IMR-90 (cell line): ENCODE measurements at regions of chr6 and their contacts with region 1.

Region 1: DNA sequence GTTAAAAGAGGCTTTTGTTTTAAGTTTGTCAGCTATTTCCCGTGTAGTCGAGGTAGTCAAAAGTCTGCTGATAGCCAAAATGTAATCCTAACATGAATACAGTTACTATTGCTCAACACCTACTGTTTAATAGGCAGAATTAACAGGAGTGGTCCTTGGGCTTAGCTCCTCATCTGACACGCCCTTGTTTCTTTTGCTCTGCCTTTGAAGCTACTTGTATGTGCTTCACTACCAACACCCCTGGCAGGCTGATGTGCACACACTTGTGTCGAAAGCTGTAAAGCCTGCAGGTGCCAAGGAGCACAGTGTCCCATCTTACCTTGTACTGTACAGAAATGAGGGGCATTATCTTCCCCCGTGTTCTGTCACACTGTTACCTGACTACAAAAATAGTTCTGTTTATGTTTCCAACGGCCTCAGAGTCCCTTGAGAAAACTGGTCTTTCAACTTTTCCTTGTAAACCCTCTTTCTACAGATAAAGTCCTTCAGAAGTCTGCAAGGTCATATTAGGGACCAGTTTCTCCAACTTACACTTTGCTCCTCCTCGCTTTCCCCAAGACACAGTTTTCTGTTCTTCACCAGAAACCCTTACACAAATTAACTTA is 9.3 kb downstream of the SDHAF4 start:
- DNase-seq: no peak
- ATAC-seq: no peak
- H3K4me3 ChIP-seq: no peak overlapping the region
- H3K27ac ChIP-seq: no peak overlapping the region
- H3K4me1 ChIP-seq: no peaks in the 10 kb centered on the region
- H3K27me3 ChIP-seq: no peaks in the 10 kb centered on the region
- CTCF ChIP-seq: no peak
- POLR2A ChIP-seq: no peak
- RAD21 ChIP-seq: no peak

Region 2: GRCh38 chr6:70520575-70520974 is 55.4 kb before region 1 on chr6:
- CTCF ChIA-PET with region 1: no interaction called
- POLR2A ChIA-PET with region 1: no interaction called
- dilution Hi-C with region 1: no loop called
- in situ Hi-C with region 1: no loop called
- intact Hi-C with region 1: loop called (anchors 10 kb)
- DNase-seq: peak; percentile 18
- ATAC-seq: no peak
- H3K4me3 ChIP-seq: no peak overlapping the region
- H3K27ac ChIP-seq: no peak overlapping the region
- H3K4me1 ChIP-seq: no peaks in the 10 kb centered on the region
- H3K27me3 ChIP-seq: no peaks in the 10 kb centered on the region
- CTCF ChIP-seq: peak; percentile 49
- POLR2A ChIP-seq: no peak
- RAD21 ChIP-seq: peak; percentile 64

Region 3: DNA sequence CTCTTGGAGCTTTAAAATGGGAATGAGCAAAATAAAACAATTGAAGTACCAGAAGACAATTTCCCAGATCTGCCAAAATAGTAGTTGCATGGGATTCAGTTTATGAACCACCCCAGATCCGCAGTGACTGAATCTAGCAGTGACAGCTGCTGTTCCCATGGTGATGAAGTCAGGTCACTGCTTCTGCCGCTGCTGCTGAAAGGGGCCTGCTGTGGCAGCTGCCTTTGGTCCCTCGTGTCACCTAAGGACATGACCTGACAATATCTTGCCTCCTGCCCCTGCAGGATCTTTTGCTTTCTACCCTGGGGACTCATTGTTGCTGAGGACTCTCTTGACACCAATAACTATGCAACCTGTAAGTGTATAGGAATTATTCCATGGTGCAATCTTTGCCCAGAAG is 678.3 kb after region 1 on chr6:
- CTCF ChIA-PET with region 1: no interaction called
- POLR2A ChIA-PET with region 1: interaction called, 12 read pairs
- dilution Hi-C with region 1: no loop called
- in situ Hi-C with region 1: no loop called
- intact Hi-C with region 1: no loop called
- DNase-seq: no peak
- ATAC-seq: no peak
- H3K4me3 ChIP-seq: no peak overlapping the region
- H3K27ac ChIP-seq: no peak overlapping the region
- H3K4me1 ChIP-seq: peaks cover 6% of the 10 kb centered on the region
- H3K27me3 ChIP-seq: no peaks in the 10 kb centered on the region
- CTCF ChIP-seq: no peak
- POLR2A ChIP-seq: no peak
- RAD21 ChIP-seq: no peak